Transverse colon (tissue), 4 donors: ENCODE measurements at regions of chr16 and their contacts with region 1.

Region 1: GRCh38 chr16:71484006-71484893 is 4.9 kb downstream of the ZNF19 start:
- DNase-seq: peak; percentile 89
- H3K4me3 ChIP-seq: peak overlapping the region; percentile 79 to 91 (median 86)
- H3K27ac ChIP-seq: peak overlapping the region; percentile 96 to 99 (median 98)
- H3K4me1 ChIP-seq: peaks cover 0 to 9% (median 6%) of the 10 kb centered on the region in 4 donors
- H3K27me3 ChIP-seq: no peaks in the 10 kb centered on the region
- CTCF ChIP-seq: no peak
- EP300 ChIP-seq: no peak
- POLR2A ChIP-seq: peak; percentile 81

Region 2: GRCh38 chr16:71461686-71462648 is 22.3 kb before region 1 on chr16 and contains the start of gene ZNF23:
- in situ Hi-C with region 1: no loop called
- intact Hi-C with region 1: loop called (anchors 1 kb)
- DNase-seq: peak; percentile 89
- H3K4me3 ChIP-seq: peak within 1 kb of the TSS; percentile 70 to 97 (median 82)
- H3K27ac ChIP-seq: peak within 1 kb of the TSS; percentile 83 to 90 (median 89)
- H3K4me1 ChIP-seq: peaks cover 4 to 27% (median 14%) of the 10 kb centered on the region in 4 donors
- H3K27me3 ChIP-seq: no peaks in the 10 kb centered on the region
- CTCF ChIP-seq: peak in 3 of 5 experiments; percentile 11 to 39 (median 17)
- EP300 ChIP-seq: no peak
- POLR2A ChIP-seq: peak; percentile 83
- total RNA-seq, gene ZNF23: 5.0 to 12.2 (median 7.0) TPM

Region 3: DNA sequence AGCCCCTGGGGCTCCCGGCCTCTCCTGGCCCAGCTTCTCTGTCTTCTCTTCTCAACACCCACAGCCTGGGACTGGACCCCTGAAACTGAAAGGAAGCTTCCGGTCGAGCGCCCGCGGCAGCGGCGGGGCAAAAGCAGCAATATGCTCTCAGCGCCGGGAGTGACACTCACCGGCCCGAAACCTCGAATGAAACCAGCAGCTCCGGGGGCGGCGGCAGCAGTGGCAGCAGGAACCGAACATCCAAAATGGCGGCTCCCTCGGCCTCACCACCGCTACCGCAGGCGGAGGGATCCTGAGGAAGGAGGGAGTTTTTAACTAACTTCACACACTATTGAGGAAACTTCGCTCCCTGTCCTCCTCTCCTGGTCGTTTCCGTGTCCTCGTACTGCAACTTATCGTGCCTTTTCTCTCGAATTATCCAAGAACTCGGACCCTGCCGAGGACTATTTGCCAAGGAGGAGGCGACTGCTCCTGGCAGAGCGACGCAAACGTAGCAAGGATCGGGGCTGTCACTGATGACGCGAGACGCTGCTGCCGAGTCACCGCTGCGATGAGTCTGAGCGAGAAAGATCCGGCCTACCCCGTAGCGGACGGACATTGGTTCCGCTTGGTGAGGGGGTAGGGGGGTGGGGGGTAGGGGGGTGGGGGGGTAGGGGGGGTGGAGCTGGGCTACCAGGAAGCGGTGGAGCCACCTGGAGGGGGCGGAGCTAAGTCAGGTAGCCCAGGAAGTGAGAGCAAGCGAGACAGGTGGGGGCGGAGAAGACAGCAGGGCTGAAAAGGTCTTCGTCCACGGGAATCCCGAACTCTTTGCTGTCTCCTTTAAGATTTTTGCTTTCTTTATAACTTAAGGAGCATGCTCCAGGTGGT is 324.6 kb after region 1 on chr16 and contains the start of gene AP1G1:
- in situ Hi-C with region 1: no loop called
- intact Hi-C with region 1: loop called (anchors 5 kb)
- DNase-seq: peak; percentile 96
- H3K4me3 ChIP-seq: peak within 1 kb of the TSS; percentile 94 to 100 (median 96)
- H3K27ac ChIP-seq: peak within 1 kb of the TSS; percentile 95 to 100 (median 100)
- H3K4me1 ChIP-seq: peaks cover 12 to 40% (median 23%) of the 10 kb centered on the region in 4 donors
- H3K27me3 ChIP-seq: no peaks in the 10 kb centered on the region
- CTCF ChIP-seq: no peak
- EP300 ChIP-seq: peak; percentile 43
- POLR2A ChIP-seq: peak; percentile 70
- total RNA-seq, gene AP1G1: 104 to 270 (median 121) TPM